AG04449 (cell line): ENCODE measurements at regions of chr2 and their contacts with region 1.

Region 1: GRCh38 chr2:237512774-237513466 is 25.9 kb downstream of the MLPH start:
- DNase-seq: no peak
- H3K4me3 ChIP-seq: no peak overlapping the region
- CTCF ChIP-seq: peak; percentile 87

Region 2: GRCh38 chr2:237092920-237093781 is 419.8 kb before region 1 on chr2:
- CTCF ChIA-PET with region 1: interaction called, 10 read pairs
- POLR2A ChIA-PET with region 1: no interaction called
- DNase-seq: no peak
- H3K4me3 ChIP-seq: no peak overlapping the region
- CTCF ChIP-seq: peak; percentile 60

Region 3: DNA sequence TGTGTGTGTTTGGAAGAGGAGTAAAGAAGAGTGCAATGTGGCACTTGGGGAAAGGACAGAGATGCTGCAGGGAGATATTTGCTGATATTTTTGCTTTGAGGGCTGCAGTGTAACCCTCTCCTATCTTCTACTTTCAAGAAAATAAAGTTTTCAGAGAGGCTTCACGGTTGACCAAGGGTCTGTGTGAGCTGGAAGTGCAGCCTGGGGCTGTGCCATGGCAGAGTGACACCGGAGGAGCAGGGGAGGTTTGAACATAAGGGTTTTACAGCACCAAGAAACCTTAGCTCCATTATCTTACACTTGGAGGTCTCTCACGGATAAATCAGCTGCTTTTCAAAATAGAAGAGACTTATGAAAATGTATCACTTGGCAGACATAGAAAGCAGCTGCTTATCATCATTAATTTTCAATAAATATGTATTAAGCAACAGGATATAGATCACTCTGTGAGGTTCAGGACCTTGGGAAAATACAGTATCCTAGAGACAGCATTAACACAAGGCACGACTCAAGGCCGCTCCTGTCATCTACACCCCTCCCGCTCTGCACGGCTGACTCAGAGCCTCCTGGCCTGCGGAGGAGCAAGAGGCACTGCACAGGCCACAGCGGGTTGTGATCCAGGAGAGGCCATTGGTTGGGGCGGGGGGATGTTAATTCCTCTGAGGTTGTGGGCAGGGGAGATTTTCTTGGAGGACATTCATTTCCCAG is 299.5 kb before region 1 on chr2:
- CTCF ChIA-PET with region 1: no interaction called
- POLR2A ChIA-PET with region 1: no interaction called
- DNase-seq: no peak
- H3K4me3 ChIP-seq: no peak overlapping the region
- CTCF ChIP-seq: no peak

Region 4: DNA sequence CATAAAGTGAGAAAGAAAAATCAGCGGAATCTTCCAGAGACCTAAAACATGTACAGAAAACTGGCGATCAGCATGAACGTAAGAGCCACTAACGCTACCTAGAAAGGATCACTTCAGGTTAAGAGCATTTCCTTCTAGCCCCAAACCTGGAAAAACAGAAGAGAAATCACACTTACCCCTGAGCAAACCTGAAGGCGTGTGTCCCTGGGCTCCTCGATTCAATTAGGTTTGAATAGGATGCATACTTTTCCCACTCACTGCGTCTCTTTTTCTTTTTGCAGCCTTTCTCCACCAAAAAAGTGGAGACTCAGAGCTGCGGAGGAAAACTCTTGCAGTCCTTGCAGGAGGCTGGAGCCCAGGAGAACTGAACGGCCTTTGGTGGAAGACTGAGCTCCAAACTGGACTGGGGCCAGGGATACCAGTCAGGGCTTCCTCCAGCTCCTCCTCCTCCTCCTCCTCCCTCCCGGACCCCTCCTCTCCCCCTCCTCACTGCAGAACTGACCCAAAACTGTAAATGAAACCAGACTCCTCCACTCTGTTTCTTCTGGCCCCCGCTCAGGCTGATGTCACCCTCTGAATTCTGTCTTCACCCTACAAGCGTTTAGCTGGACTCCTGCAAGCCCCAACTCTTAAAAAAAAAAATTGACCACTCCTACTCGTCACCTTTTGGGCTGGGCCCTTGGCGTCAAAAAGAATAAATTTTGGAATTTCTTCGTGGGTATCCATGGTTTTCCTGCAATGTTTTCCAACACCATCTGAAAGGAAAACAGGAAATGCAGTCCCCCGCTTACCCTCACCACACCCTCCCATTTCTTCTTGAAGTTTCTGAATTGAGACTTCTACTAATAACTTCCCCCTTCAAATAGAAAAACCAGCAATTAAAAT is 98.9 kb before region 1 on chr2 and contains the start of gene COL6A3:
- CTCF ChIA-PET with region 1: interaction called, 31 read pairs
- POLR2A ChIA-PET with region 1: interaction called, 3 read pairs
- DNase-seq: peak; percentile 81
- H3K4me3 ChIP-seq: peak within 1 kb of the TSS; percentile 95
- CTCF ChIP-seq: no peak

Region 5: DNA sequence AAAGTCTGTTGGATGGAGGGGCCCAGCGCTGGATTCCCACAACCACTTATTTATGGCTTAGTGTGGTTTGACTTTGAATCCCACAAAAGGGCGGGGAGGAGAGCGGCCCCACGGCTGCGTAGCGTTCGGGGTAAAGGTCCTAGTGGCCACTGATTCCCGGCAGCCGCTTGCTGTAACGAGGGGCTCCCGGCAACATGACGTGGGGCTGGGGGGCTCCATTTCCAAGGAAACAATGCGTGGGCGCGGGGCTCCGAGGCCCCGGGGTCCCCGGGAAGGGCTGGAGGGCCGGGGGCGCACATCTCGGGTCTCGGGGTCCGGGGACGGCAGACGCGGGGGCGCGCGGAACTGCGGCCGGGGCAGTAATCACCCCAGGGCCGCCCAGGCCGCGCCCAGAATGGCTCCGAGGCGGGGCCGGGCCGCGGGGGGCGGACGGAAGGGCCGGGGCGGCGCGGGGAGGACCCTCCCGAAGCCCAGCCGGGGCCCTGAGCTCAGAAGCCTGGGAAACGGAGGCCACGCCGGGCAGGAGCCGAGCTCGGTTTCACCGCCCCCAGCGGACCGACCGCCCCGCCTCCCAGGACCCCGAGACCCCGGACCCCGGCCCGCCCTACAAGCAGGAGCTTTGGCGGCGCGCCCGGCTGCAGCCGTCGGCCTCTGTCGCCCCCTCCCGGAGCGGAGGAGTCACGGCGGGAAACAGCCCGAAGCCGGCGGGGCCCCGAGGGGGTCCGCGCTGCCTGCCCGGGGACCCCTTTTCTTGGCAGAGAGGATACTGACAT is 37.8 kb before region 1 on chr2:
- CTCF ChIA-PET with region 1: interaction called, 36 read pairs
- POLR2A ChIA-PET with region 1: interaction called, 3 read pairs
- DNase-seq: no peak
- H3K4me3 ChIP-seq: peak overlapping the region; percentile 56
- CTCF ChIP-seq: peak; percentile 93

Region 6: GRCh38 chr2:237500681-237501424 is 12.1 kb before region 1 on chr2:
- CTCF ChIA-PET with region 1: interaction called, 151 read pairs
- POLR2A ChIA-PET with region 1: interaction called, 3 read pairs
- DNase-seq: peak; percentile 100
- H3K4me3 ChIP-seq: no peak overlapping the region; the same call in 1 of the 2 replicates
- CTCF ChIP-seq: no peak

Region 7: GRCh38 chr2:237547841-237548416 is 35.0 kb after region 1 on chr2:
- CTCF ChIA-PET with region 1: interaction called, 14 read pairs
- POLR2A ChIA-PET with region 1: no interaction called
- DNase-seq: no peak
- H3K4me3 ChIP-seq: no peak overlapping the region
- CTCF ChIP-seq: no peak

Region 8: DNA sequence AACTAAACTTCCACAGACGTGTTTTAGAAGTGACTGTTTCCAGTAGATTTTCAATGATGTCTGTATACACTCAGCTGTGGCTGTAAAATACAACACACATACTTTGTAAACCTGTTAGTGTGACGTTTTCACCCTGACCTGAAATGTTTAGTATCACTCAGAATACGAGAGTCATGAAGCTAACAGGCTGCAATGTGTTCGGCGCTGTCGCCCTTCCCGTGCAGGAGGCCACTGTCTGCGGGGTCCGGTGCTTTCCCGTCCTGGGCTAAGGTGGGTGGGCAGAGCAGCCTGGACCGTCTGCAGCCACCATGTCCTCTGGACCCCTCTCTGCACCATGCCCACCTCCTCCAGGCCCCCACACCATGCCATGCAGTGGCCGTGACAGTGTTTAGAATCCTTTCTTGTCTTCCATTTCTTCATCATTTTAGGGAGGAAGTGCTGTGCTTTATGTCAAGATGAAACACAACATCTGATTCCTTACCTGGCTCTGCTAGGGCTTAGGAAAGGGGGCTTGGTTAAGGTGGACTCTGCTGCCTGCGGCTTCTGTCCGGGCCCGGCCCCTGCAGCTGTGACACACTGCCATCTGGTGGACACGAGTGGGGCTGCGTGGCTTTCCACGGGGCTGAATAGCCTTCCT is 231.8 kb after region 1 on chr2:
- CTCF ChIA-PET with region 1: interaction called, 27 read pairs
- POLR2A ChIA-PET with region 1: no interaction called
- DNase-seq: no peak
- H3K4me3 ChIP-seq: no peak overlapping the region
- CTCF ChIP-seq: peak; percentile 94